Heart right ventricle (tissue), 16 donors: ENCODE measurements at regions of chr16 and their contacts with region 1.

Region 1: GRCh38 chr16:1533443-1533951 is at the start of gene TMEM204:
- DNase-seq: peak; percentile 85 to 90
- ATAC-seq: peak; percentile 54 to 83 (median 77)
- H3K4me3 ChIP-seq: peak within 1 kb of the TSS; percentile 71 to 94 (median 88)
- H3K27ac ChIP-seq: peak within 1 kb of the TSS; percentile 87 to 99 (median 95)
- H3K4me1 ChIP-seq: peaks cover 32 to 77% (median 75%) of the 10 kb centered on the region in 9 donors
- H3K27me3 ChIP-seq: peaks cover 0 to 30% (median 0%) of the 10 kb centered on the region in 7 donors
- CTCF ChIP-seq: no peak
- total RNA-seq, gene TMEM204: 10.7 to 24.4 (median 18.1) TPM

Region 2: DNA sequence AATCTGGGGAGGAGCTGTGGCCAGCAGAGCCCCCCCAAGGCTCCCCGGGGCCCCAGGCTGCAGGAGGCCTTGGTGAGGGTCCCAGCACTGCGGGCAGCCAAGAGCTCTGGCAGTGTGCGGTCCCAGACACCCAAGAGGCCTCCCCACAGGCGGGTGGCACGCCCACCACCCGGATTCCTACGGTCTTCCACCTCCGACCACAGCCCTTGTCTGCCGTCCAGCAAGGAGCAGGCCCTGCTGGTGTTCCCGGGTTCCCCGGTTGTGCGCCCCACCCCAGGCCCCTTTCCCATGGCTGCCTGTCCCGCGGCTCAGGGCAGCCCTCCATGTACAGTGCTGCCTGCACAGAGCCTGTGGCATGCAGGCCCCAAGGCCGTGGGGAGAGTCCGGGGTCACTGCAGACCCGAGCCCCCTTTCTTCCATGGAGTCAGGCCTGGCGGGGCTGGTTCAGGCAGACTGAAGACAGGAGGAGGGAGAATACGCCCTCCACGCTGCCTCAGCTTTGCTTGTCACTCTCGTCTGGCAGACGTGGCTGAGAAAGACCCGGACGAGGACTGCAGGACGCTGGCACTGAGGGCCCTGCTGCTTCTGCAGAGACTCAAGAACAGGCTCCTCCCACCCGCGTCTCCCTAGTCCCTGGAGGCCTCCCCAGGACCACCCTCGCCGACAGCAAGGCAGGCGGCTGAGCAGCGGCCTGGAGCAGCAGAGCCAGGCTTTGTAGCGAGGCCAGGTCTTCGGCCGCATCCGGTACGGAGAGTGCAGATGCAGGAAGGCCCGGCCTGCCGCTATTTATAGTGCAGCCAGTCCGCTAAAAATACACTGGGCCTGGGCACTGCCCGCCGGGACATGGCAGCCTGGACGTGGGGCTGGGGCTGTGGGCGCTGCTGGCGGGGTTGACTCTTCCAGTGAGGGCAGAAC is 23.9 kb before region 1 on chr16:
- intact Hi-C with region 1: loop called in 1 of 10 experiments (anchors 1 kb)
- DNase-seq: peak; percentile 74 to 76
- ATAC-seq: peak; percentile 84 to 95 (median 90)
- H3K4me3 ChIP-seq: peak overlapping the region in 2 of 10 donors; percentile 5 to 22
- H3K27ac ChIP-seq: peak overlapping the region; percentile 80 to 98 (median 89)
- H3K4me1 ChIP-seq: peaks cover 18 to 48% (median 27%) of the 10 kb centered on the region in 9 donors
- H3K27me3 ChIP-seq: no peaks in the 10 kb centered on the region
- CTCF ChIP-seq: no peak